CD4-positive, alpha-beta memory T cell (primary cell): ENCODE measurements at regions of chr17 and their contacts with region 1.

Region 1: DNA sequence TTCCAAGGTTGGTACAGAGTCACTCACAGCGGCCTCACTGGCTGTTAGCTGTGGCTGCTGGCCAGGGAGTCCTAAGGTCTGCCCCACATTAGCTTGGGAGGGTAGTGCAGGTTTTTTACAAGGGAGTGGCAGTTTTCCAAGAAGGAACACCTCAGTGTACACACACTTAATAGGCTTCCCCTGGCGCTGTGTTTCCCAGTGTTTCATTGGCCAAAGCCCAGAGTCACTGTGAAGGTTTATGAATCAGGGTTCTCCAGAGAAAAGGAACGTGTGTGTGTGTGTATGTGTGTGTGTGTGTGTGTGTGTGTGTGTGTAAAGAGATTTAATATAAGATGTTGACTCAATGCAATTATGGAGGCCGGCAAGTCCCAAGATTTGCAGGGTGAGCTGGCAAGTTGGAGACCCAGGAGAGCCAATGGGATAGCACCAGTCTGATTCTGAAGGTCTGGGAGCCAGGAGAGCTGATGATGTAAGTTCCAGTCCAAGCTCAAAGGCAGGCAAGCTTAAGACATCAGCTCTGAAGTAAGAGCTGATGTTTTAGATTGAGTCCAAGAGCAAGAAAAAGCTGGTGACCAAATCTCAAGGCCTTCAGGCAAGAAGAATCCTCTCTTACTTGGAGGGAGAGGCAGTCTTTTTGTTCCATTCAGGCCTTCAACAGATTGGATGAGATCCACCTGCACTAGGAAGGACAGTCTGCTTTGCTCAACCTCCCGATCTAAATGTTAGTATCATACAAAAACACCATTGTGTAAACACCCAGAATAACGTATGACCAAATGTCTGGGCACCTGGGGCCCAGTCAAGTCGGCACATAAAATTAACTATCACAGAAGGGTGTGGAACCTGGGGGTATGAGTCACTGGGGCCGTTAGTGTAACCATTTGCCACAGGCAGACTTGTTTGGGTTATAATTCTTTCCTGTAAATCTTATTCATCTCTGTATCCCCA is 206.8 kb downstream of the PRKCA start:
- DNase-seq: peak in 1 of 5 donors; percentile 58
- H3K4me3 ChIP-seq: no peak overlapping the region
- H3K4me3 Mint-ChIP-seq: peak overlapping the region in 7 of 8 donors; percentile 22 to 76 (median 73)
- H3K27ac ChIP-seq: no peak overlapping the region
- H3K27ac Mint-ChIP-seq: peak overlapping the region in 6 of 7 donors; percentile 30 to 81 (median 72)
- H3K4me1 ChIP-seq: peaks cover 41% of the 10 kb centered on the region
- H3K4me1 Mint-ChIP-seq: peaks cover 51 to 85% (median 60%) of the 10 kb centered on the region in 4 donors
- H3K27me3 ChIP-seq: no peaks in the 10 kb centered on the region
- H3K27me3 Mint-ChIP-seq: no peaks in the 10 kb centered on the region

Region 2: DNA sequence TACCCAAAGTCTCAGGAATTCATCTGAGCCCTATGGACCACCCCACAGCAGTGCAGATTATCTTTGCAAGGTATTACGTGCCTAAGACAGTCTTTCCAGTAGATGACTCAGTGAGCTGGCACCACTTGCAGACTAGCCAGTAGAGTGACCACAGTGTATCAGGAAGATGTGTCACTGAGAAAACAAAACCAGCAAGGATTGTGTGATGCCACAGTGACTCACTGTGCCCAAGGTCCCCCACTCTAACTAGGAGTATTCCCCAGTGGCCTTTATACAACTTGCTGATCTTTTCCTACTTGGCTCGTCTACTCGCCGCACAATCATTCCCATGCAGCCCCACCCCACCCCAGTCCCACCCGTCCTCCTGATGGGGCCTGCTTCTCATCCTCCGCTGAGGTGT is 233.5 kb before region 1 on chr17:
- CTCF ChIA-PET with region 1: no interaction called
- POLR2A ChIA-PET with region 1: no interaction called
- intact Hi-C with region 1: no loop called
- DNase-seq: no peak
- H3K4me3 ChIP-seq: no peak overlapping the region
- H3K4me3 Mint-ChIP-seq: no peak overlapping the region
- H3K27ac ChIP-seq: no peak overlapping the region
- H3K27ac Mint-ChIP-seq: no peak overlapping the region
- H3K4me1 ChIP-seq: no peaks in the 10 kb centered on the region
- H3K4me1 Mint-ChIP-seq: peaks cover 0 to 2% (median 0%) of the 10 kb centered on the region in 4 donors
- H3K27me3 ChIP-seq: no peaks in the 10 kb centered on the region
- H3K27me3 Mint-ChIP-seq: peaks cover 0 to 3% of the 10 kb centered on the region in 2 donors

Region 3: GRCh38 chr17:66481271-66481670 is 27.9 kb before region 1 on chr17:
- CTCF ChIA-PET with region 1: no interaction called
- POLR2A ChIA-PET with region 1: no interaction called
- intact Hi-C with region 1: no loop called
- DNase-seq: no peak
- H3K4me3 ChIP-seq: no peak overlapping the region
- H3K4me3 Mint-ChIP-seq: no peak overlapping the region
- H3K27ac ChIP-seq: no peak overlapping the region
- H3K27ac Mint-ChIP-seq: no peak overlapping the region
- H3K4me1 ChIP-seq: no peaks in the 10 kb centered on the region
- H3K4me1 Mint-ChIP-seq: peaks cover 20 to 31% (median 30%) of the 10 kb centered on the region in 4 donors
- H3K27me3 ChIP-seq: no peaks in the 10 kb centered on the region
- H3K27me3 Mint-ChIP-seq: no peaks in the 10 kb centered on the region

Region 4: DNA sequence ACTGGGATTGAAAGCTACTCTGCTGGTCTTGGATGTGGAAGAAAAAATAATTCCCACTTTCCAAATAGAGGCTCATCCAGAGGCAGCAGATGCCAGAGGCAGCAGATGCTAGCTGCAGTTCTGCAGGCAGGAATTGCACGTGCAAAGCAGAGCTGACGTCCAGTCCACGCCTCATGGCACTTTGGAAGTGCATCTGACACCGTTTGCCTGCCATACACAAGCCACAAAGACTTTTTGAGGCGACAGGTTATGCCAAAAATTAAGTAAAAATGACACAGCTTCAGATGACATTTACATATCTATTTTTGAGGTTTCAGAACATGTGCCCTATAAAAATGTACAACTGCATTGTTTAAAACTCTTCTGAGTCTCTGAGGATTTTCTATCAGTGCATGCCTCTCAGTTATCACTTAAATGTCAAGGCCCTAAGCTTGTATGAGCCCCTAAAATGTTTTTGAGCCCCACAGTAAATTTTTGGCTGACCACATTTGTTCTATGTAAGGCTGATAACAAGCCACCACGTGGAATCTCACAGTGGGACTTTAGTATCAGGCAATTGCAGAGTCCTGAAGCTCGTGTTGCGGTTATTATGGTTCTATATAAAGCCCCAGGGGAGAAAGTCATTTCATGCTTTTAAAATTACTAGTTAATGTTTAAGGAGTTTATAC is 32.4 kb after region 1 on chr17:
- CTCF ChIA-PET with region 1: no interaction called
- POLR2A ChIA-PET with region 1: no interaction called
- intact Hi-C with region 1: loop called (anchors 5 kb)
- DNase-seq: no peak
- H3K4me3 ChIP-seq: no peak overlapping the region
- H3K4me3 Mint-ChIP-seq: peak overlapping the region in 6 of 8 donors; percentile 23 to 70 (median 46)
- H3K27ac ChIP-seq: no peak overlapping the region
- H3K27ac Mint-ChIP-seq: peak overlapping the region in 5 of 7 donors; percentile 14 to 74 (median 15)
- H3K4me1 ChIP-seq: peaks cover 45% of the 10 kb centered on the region
- H3K4me1 Mint-ChIP-seq: peaks cover 42 to 78% (median 62%) of the 10 kb centered on the region in 4 donors
- H3K27me3 ChIP-seq: no peaks in the 10 kb centered on the region
- H3K27me3 Mint-ChIP-seq: no peaks in the 10 kb centered on the region